Lower leg skin (tissue), 4 donors: ENCODE measurements at regions of chr9 and their contacts with region 1.

Region 1: GRCh38 chr9:106670423-106670822 is 192.5 kb upstream of the ZNF462 start:
- DNase-seq: no peak
- H3K4me3 ChIP-seq: no peak overlapping the region
- CTCF ChIP-seq: no peak
- POLR2A ChIP-seq: no peak

Region 2: DNA sequence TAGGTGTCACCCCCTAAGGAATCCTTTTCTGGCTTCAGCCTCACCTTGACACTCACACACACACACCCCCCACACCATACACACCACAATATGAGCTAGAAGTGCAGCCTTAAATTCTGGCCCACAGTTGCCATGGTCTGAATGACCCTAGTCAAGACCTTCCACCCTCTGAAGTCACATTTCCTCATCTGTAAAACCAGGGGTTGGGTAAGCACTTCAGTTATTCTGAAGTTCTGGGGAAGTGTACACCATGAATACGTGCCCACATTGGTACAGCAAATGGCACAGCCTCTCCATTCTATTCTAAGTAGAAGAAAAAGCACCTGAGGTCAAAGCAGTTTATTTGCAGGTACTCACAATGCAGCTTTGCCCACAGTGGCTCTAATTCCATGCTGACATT is 1191.9 kb after region 1 on chr9:
- intact Hi-C with region 1: loop called (anchors 5 kb)
- DNase-seq: no peak
- H3K4me3 ChIP-seq: no peak overlapping the region
- CTCF ChIP-seq: no peak
- POLR2A ChIP-seq: no peak